ENCODE measurements at regions of chr12 and their contacts with region 1.

Region 1: GRCh38 chr12:11798856-11799501 is 149.5 kb downstream of the ETV6 start:
- DNase-seq: no peak
- H3K4me3 ChIP-seq: no peak overlapping the region
- H3K27ac ChIP-seq: peak overlapping the region; percentile 80 to 91
- H3K4me1 ChIP-seq: peaks cover 19 to 34% of the 10 kb centered on the region in 2 donors
- H3K27me3 ChIP-seq: no peaks in the 10 kb centered on the region
- CTCF ChIP-seq: no peak

Region 2: GRCh38 chr12:11862798-11863197 is 63.8 kb after region 1 on chr12:
- intact Hi-C with region 1: loop called (anchors 5 kb)
- DNase-seq: no peak
- H3K4me3 ChIP-seq: no peak overlapping the region
- H3K27ac ChIP-seq: peak overlapping the region; percentile 86 to 94
- H3K4me1 ChIP-seq: peaks cover 13 to 29% of the 10 kb centered on the region in 2 donors
- H3K27me3 ChIP-seq: no peaks in the 10 kb centered on the region
- CTCF ChIP-seq: no peak